ENCODE measurements at regions of chr18 and their contacts with region 1.

Region 1: GRCh38 chr18:29681578-29681977 is 1361.0 kb downstream of the DSC3 start:
- DNase-seq: no peak
- ATAC-seq: no peak
- H3K4me3 ChIP-seq: no peak overlapping the region
- H3K4me3 Mint-ChIP-seq: no peak overlapping the region
- H3K27ac ChIP-seq: no peak overlapping the region
- H3K27ac Mint-ChIP-seq: no peak overlapping the region
- H3K4me1 ChIP-seq: no peaks in the 10 kb centered on the region
- H3K4me1 Mint-ChIP-seq: no peaks in the 10 kb centered on the region
- H3K27me3 ChIP-seq: no peaks in the 10 kb centered on the region
- H3K27me3 Mint-ChIP-seq: no peaks in the 10 kb centered on the region
- CTCF ChIP-seq: no peak

Region 2: DNA sequence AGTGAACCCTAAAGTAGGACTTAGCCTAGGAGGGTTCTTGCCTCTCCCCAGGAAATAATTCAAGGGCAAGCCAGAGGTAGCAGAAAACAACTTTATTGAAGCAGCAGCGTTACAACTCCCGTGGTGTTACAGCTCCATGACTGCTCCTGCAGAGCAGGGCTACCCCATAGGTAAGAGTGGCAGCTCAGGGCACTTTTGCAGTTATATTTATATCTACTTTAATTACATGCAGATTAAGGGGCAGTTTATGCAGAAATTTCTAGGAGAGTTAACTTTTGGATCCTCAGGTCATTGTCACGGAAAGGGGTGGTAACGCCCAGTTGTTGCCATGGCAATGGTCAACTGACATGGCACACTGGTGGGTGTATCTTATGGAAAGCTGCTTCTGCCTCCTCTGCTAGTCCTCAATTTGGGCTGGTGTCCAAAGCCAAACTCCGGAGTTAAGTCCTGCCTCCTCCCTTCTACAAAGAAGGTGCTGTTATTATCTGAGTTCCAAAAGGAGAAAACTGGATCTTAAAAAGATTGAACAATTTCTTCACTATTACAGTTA is 52.0 kb before region 1 on chr18:
- CTCF ChIA-PET with region 1: no interaction called
- POLR2A ChIA-PET with region 1: no interaction called
- intact Hi-C with region 1: no loop called
- DNase-seq: no peak
- ATAC-seq: no peak
- H3K4me3 ChIP-seq: no peak overlapping the region
- H3K4me3 Mint-ChIP-seq: no peak overlapping the region
- H3K27ac ChIP-seq: no peak overlapping the region
- H3K27ac Mint-ChIP-seq: no peak overlapping the region
- H3K4me1 ChIP-seq: no peaks in the 10 kb centered on the region
- H3K4me1 Mint-ChIP-seq: no peaks in the 10 kb centered on the region
- H3K27me3 ChIP-seq: no peaks in the 10 kb centered on the region
- H3K27me3 Mint-ChIP-seq: no peaks in the 10 kb centered on the region
- CTCF ChIP-seq: no peak

Region 3: GRCh38 chr18:29693334-29693733 is 11.8 kb after region 1 on chr18:
- CTCF ChIA-PET with region 1: no interaction called
- POLR2A ChIA-PET with region 1: no interaction called
- intact Hi-C with region 1: no loop called
- DNase-seq: no peak
- ATAC-seq: no peak
- H3K4me3 ChIP-seq: no peak overlapping the region
- H3K4me3 Mint-ChIP-seq: no peak overlapping the region
- H3K27ac ChIP-seq: no peak overlapping the region
- H3K27ac Mint-ChIP-seq: no peak overlapping the region
- H3K4me1 ChIP-seq: no peaks in the 10 kb centered on the region
- H3K4me1 Mint-ChIP-seq: no peaks in the 10 kb centered on the region
- H3K27me3 ChIP-seq: no peaks in the 10 kb centered on the region
- H3K27me3 Mint-ChIP-seq: no peaks in the 10 kb centered on the region
- CTCF ChIP-seq: no peak

Region 4: DNA sequence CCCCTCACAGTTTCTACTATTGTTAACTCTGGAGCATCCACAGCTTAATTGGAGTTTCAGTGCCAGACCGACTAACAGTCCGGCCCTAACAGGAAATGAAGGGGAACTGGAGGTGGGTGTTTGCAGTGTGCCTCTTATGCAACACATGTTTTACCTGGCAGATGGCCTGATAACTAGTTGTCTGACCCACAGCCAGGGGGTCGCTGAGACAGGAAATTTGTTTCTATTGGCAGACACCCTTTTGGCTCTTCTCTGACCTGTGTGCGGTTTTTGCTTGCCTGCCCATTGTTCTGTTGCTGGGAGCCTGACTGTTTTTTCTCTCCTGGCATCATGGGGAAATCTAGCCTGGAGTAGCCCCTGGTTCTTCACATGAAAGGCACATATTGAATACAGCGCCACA is 31.2 kb after region 1 on chr18:
- CTCF ChIA-PET with region 1: no interaction called
- POLR2A ChIA-PET with region 1: no interaction called
- intact Hi-C with region 1: no loop called
- DNase-seq: no peak
- ATAC-seq: no peak
- H3K4me3 ChIP-seq: no peak overlapping the region
- H3K4me3 Mint-ChIP-seq: no peak overlapping the region
- H3K27ac ChIP-seq: no peak overlapping the region
- H3K27ac Mint-ChIP-seq: no peak overlapping the region
- H3K4me1 ChIP-seq: no peaks in the 10 kb centered on the region
- H3K4me1 Mint-ChIP-seq: no peaks in the 10 kb centered on the region
- H3K27me3 ChIP-seq: no peaks in the 10 kb centered on the region
- H3K27me3 Mint-ChIP-seq: no peaks in the 10 kb centered on the region
- CTCF ChIP-seq: no peak

Region 5: GRCh38 chr18:29737620-29738019 is 56.0 kb after region 1 on chr18:
- CTCF ChIA-PET with region 1: no interaction called
- POLR2A ChIA-PET with region 1: no interaction called
- intact Hi-C with region 1: loop called in 1 of 2 experiments (anchors 10 kb)
- DNase-seq: no peak
- ATAC-seq: no peak
- H3K4me3 ChIP-seq: no peak overlapping the region
- H3K4me3 Mint-ChIP-seq: no peak overlapping the region
- H3K27ac ChIP-seq: no peak overlapping the region
- H3K27ac Mint-ChIP-seq: no peak overlapping the region
- H3K4me1 ChIP-seq: no peaks in the 10 kb centered on the region
- H3K4me1 Mint-ChIP-seq: no peaks in the 10 kb centered on the region
- H3K27me3 ChIP-seq: no peaks in the 10 kb centered on the region
- H3K27me3 Mint-ChIP-seq: no peaks in the 10 kb centered on the region
- CTCF ChIP-seq: no peak

Region 6: GRCh38 chr18:29749704-29750103 is 68.1 kb after region 1 on chr18:
- CTCF ChIA-PET with region 1: no interaction called
- POLR2A ChIA-PET with region 1: no interaction called
- intact Hi-C with region 1: no loop called
- DNase-seq: no peak
- ATAC-seq: no peak
- H3K4me3 ChIP-seq: no peak overlapping the region
- H3K4me3 Mint-ChIP-seq: no peak overlapping the region
- H3K27ac ChIP-seq: no peak overlapping the region
- H3K27ac Mint-ChIP-seq: no peak overlapping the region
- H3K4me1 ChIP-seq: no peaks in the 10 kb centered on the region
- H3K4me1 Mint-ChIP-seq: no peaks in the 10 kb centered on the region
- H3K27me3 ChIP-seq: no peaks in the 10 kb centered on the region
- H3K27me3 Mint-ChIP-seq: no peaks in the 10 kb centered on the region
- CTCF ChIP-seq: no peak